CD4-positive, alpha-beta T cell (primary cell): ENCODE measurements at regions of chr6 and their contacts with region 1.

Region 1: GRCh38 chr6:161111261-161111660 is 119.7 kb downstream of the MAP3K4 start:
- DNase-seq: peak in 6 of 14 experiments; percentile 14 to 67 (median 41)
- ATAC-seq: peak; percentile 98
- H3K4me3 ChIP-seq: no peak overlapping the region
- H3K4me3 Mint-ChIP-seq: peak overlapping the region; percentile 27
- H3K27ac ChIP-seq: peak overlapping the region in 1 of 2 donors; percentile 30
- H3K27ac Mint-ChIP-seq: peak overlapping the region; percentile 91
- H3K4me1 ChIP-seq: peaks cover 13% of the 10 kb centered on the region
- H3K4me1 Mint-ChIP-seq: peaks cover 33% of the 10 kb centered on the region
- H3K27me3 ChIP-seq: no peaks in the 10 kb centered on the region
- H3K27me3 Mint-ChIP-seq: no peaks in the 10 kb centered on the region
- CTCF ChIP-seq: no peak

Region 2: GRCh38 chr6:160930547-160931377 is 180.5 kb before region 1 on chr6:
- CTCF ChIA-PET with region 1: interaction called, 4 read pairs
- POLR2A ChIA-PET with region 1: no interaction called
- intact Hi-C with region 1: loop called in 1 of 2 experiments (anchors 10 kb)
- DNase-seq: peak; percentile 17 to 75 (median 47)
- ATAC-seq: peak; percentile 39
- H3K4me3 ChIP-seq: peak overlapping the region; percentile 43
- H3K4me3 Mint-ChIP-seq: no peak overlapping the region
- H3K27ac ChIP-seq: no peak overlapping the region
- H3K27ac Mint-ChIP-seq: no peak overlapping the region
- H3K4me1 ChIP-seq: peaks cover 11% of the 10 kb centered on the region
- H3K4me1 Mint-ChIP-seq: no peaks in the 10 kb centered on the region
- H3K27me3 ChIP-seq: peaks cover 0 to 21% of the 10 kb centered on the region in 2 experiments
- H3K27me3 Mint-ChIP-seq: peaks cover 49% of the 10 kb centered on the region
- CTCF ChIP-seq: peak; percentile 77

Region 3: DNA sequence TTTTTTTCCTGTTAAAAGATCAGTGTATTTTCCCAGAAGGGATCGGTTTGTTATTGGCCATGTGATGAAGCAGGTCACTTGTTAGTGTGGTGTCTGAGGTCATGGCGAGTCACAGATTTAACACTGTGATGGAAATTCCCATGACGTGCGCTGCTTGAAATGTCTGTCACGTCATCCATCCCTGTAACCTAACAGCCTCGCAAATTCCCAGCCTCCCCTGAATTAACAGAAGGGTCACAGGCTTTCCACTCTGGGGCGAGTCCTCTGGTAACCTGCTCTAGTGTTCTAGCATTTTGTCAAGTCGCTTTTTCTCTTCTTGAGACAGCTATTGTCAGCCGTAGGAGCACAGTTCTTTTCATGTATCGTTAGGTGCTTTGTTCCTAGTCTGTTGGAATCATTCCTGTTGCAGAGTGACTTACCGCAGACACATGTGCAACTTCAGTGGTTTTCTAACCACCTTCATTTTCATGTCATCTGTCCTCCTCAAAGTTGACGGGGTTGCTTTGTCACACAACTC is 17.5 kb after region 1 on chr6:
- CTCF ChIA-PET with region 1: no interaction called
- POLR2A ChIA-PET with region 1: interaction called, 5 read pairs
- intact Hi-C with region 1: loop called in 1 of 2 experiments (anchors 1 kb)
- DNase-seq: peak in 2 of 14 experiments; percentile 72 to 83
- ATAC-seq: peak; percentile 64
- H3K4me3 ChIP-seq: no peak overlapping the region
- H3K4me3 Mint-ChIP-seq: no peak overlapping the region
- H3K27ac ChIP-seq: no peak overlapping the region
- H3K27ac Mint-ChIP-seq: peak overlapping the region; percentile 64
- H3K4me1 ChIP-seq: peaks cover 6% of the 10 kb centered on the region
- H3K4me1 Mint-ChIP-seq: peaks cover 22% of the 10 kb centered on the region
- H3K27me3 ChIP-seq: no peaks in the 10 kb centered on the region
- H3K27me3 Mint-ChIP-seq: no peaks in the 10 kb centered on the region
- CTCF ChIP-seq: no peak